Ascending aorta (tissue), 2 donors: ENCODE measurements at regions of chr3 and their contacts with region 1.

Region 1: GRCh38 chr3:27484015-27484844 is at the start of gene SLC4A7:
- DNase-seq: peak; percentile 88 to 98
- H3K4me3 ChIP-seq: peak within 1 kb of the TSS; percentile 71 to 92
- H3K27ac ChIP-seq: peak within 1 kb of the TSS; percentile 92 to 99
- H3K4me1 ChIP-seq: peaks cover 3 to 19% of the 10 kb centered on the region in 2 donors
- H3K27me3 ChIP-seq: no peaks in the 10 kb centered on the region
- CTCF ChIP-seq: no peak
- total RNA-seq, gene SLC4A7: 11.0 TPM

Region 2: GRCh38 chr3:27134165-27134796 is 349.9 kb before region 1 on chr3:
- intact Hi-C with region 1: loop called (anchors 10 kb)
- DNase-seq: peak in 1 of 2 donors; percentile 68
- H3K4me3 ChIP-seq: no peak overlapping the region
- H3K27ac ChIP-seq: no peak overlapping the region
- H3K4me1 ChIP-seq: no peaks in the 10 kb centered on the region
- H3K27me3 ChIP-seq: no peaks in the 10 kb centered on the region
- CTCF ChIP-seq: peak; percentile 66 to 89 (median 70)

Region 3: GRCh38 chr3:27503526-27503925 is 19.3 kb after region 1 on chr3:
- intact Hi-C with region 1: loop called (anchors 1 kb)
- DNase-seq: peak; percentile 38 to 89
- H3K4me3 ChIP-seq: no peak overlapping the region
- H3K27ac ChIP-seq: peak overlapping the region; percentile 70 to 84
- H3K4me1 ChIP-seq: peaks cover 6 to 13% of the 10 kb centered on the region in 2 donors
- H3K27me3 ChIP-seq: no peaks in the 10 kb centered on the region
- CTCF ChIP-seq: no peak

Region 4: DNA sequence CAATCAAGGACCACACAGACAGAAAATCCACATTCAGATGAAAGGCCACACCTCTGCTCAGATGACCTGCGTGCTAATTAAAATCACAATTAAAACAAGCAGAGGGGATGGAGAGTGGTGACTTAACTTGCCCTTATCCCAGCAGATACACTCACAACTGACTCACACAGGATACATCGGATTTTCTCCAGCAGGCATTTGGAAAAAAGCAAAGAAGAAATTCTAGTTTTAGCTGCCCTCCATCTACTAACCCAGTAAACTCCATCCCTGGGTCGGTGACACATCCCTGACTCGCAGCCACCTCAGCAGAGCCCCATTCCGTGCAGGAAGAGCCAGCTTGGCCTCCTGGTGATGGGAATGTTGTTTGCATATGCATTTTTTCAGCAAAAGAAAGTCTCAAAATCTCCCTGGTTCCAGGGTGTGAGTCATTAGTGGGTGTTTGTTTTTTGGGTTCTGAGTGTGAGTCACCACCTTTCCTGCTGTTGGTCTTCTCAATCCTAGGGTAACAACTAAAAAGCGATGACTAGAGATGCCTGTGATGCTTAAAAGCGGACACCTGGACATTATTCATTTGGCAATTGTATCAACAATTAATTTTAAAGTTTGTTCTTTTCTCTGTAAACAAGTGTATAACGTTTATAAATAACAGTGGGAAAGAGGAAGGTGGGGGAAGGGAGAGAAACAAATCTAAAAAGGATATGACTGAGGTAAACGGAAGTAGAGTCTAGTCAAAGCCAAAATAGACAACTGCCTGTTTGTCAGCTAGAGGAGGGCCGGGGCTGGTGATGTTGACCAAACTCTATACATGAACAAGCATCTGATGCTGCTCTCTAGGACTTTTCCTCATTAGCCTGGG is 49.7 kb after region 1 on chr3:
- intact Hi-C with region 1: loop called (anchors 2 kb)
- DNase-seq: peak; percentile 68 to 95
- H3K4me3 ChIP-seq: no peak overlapping the region
- H3K27ac ChIP-seq: peak overlapping the region; percentile 83 to 86
- H3K4me1 ChIP-seq: peaks cover 0 to 26% of the 10 kb centered on the region in 2 donors
- H3K27me3 ChIP-seq: no peaks in the 10 kb centered on the region
- CTCF ChIP-seq: peak; percentile 46 to 68 (median 48)

Region 5: GRCh38 chr3:27590437-27591298 is 106.4 kb after region 1 on chr3:
- intact Hi-C with region 1: loop called (anchors 5 kb)
- DNase-seq: no peak
- H3K4me3 ChIP-seq: peak overlapping the region; percentile 5 to 16
- H3K27ac ChIP-seq: peak overlapping the region; percentile 76 to 81
- H3K4me1 ChIP-seq: peaks cover 3 to 25% of the 10 kb centered on the region in 2 donors
- H3K27me3 ChIP-seq: no peaks in the 10 kb centered on the region
- CTCF ChIP-seq: no peak

Region 6: DNA sequence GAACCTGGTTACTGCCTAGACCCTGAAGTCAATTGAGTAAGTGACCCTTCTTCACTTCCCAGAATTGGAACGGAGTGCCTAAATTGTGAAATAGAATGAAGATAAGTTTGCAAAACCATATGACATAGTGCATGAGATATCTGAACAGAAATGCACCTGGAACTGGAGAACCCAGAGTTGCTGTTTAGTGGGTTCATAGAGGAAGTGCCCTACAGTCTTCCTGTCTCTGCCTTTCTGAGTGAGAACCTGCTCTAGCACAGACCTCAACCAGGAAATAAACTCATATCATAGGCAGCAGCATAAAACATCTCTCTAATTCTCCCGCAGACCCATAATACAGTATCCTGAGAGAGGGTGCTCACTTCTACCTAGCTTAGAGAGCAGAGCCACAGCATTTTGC is 155.0 kb after region 1 on chr3:
- intact Hi-C with region 1: loop called (anchors 1 kb)
- DNase-seq: no peak
- H3K4me3 ChIP-seq: no peak overlapping the region
- H3K27ac ChIP-seq: peak overlapping the region in 1 of 2 donors; percentile 83
- H3K4me1 ChIP-seq: peaks cover 4 to 18% of the 10 kb centered on the region in 2 donors
- H3K27me3 ChIP-seq: no peaks in the 10 kb centered on the region
- CTCF ChIP-seq: no peak

Region 7: DNA sequence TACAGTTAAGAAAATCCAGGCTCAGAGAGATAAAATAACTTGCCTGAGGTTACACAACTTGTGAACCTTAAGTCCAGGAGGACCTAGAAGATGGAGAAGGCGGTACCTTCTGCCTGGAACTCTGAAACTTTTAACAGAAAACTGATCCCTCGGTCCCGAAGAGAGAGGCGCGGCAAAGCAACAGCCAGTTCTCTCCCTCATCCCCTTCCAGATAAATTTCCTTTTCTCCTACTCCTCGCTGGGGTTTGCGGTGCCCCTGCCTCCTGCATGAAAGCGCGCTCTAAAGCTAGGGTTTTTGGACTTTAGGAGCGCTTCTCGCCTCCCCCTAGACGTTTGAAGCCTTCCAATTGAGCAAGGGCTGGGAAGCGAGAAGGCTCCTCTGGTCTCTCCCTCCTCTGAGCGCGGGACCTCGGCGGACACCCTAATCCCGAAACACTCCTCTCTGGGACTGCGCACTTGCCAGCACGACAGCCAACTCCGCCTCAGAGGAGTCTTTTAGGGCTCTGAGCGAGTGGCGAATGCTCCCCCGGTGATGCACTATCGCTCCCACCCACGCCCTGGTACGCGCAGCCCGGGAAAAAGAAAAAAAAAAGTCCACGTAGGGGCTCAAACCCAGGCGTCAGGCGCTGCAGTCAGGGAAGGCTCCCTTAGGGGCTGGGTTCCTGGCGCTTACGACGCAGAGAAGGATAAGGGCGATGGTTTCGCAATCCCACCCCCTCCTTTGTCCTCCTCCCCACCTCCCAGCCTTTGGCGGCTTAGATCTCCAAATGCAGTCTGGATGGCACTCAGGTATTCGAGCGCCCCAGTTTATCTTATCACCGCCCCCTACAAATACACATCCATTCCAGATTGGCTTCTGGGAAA is 245.8 kb after region 1 on chr3:
- intact Hi-C with region 1: no loop called
- DNase-seq: no peak
- H3K4me3 ChIP-seq: peak overlapping the region in 1 of 2 donors; percentile 22
- H3K27ac ChIP-seq: no peak overlapping the region
- H3K4me1 ChIP-seq: peaks cover 0 to 9% of the 10 kb centered on the region in 2 donors
- H3K27me3 ChIP-seq: peaks cover 36% of the 10 kb centered on the region
- CTCF ChIP-seq: no peak